Activated T-helper 1 cell treated with anti-CD3 and anti-CD28 coated beads, Interleukin-12 subunit alpha, Interleukin-12 subunit beta, Interleukin-2, Interleukin-4 antibody, amounts not matched to agents 30 ng/mL and 10 ng/mL and 1 ng/mL, durations not matched to agents 14 hours and 24 hours and 36 hours (primary cell): ENCODE measurements at regions of chr12 and their contacts with region 1.

Region 1: DNA sequence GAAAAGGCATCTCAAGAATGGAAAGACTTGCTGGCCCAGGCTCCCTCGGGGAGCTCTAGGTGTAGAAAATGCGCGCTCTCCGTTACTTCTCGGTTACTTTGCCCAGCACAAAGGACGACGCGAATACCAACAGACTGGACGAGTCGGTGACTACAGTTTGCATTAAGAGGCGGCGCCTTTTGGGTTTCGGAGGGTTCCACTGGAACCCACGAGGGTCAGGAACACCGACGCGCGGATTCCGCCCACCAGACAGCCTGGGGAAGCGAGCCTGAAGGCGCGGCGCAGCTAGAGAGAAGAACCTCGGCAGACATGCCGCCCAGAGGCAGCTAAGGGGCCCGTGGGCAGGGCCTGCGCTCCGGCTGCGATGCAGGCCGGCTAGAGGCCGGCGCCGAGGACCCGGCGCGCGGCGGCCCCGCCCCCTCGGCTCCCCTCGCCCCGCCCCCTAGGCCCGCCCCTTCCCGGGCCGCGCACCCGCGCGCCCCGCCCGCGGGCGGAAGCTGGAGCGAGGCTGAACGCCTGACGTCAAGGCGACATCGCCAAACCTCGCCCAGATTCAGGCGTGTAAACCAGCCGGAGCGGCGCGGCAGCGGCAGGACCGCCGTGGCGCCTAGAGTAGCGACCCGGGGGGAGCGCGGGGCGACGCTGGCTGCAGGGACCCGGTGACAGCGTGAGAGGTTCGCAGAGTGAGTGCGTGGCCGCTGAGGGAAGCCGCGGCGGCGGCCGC is at the start of gene RAP1B:
- DNase-seq: peak; percentile 89
- H3K4me3 Mint-ChIP-seq: peak within 1 kb of the TSS; percentile 96
- H3K27ac Mint-ChIP-seq: peak within 1 kb of the TSS; percentile 96
- H3K4me1 Mint-ChIP-seq: peaks cover 52% of the 10 kb centered on the region
- H3K27me3 Mint-ChIP-seq: no peaks in the 10 kb centered on the region
- total RNA-seq, gene RAP1B: 244 and 263 TPM in 2 replicates

Region 2: DNA sequence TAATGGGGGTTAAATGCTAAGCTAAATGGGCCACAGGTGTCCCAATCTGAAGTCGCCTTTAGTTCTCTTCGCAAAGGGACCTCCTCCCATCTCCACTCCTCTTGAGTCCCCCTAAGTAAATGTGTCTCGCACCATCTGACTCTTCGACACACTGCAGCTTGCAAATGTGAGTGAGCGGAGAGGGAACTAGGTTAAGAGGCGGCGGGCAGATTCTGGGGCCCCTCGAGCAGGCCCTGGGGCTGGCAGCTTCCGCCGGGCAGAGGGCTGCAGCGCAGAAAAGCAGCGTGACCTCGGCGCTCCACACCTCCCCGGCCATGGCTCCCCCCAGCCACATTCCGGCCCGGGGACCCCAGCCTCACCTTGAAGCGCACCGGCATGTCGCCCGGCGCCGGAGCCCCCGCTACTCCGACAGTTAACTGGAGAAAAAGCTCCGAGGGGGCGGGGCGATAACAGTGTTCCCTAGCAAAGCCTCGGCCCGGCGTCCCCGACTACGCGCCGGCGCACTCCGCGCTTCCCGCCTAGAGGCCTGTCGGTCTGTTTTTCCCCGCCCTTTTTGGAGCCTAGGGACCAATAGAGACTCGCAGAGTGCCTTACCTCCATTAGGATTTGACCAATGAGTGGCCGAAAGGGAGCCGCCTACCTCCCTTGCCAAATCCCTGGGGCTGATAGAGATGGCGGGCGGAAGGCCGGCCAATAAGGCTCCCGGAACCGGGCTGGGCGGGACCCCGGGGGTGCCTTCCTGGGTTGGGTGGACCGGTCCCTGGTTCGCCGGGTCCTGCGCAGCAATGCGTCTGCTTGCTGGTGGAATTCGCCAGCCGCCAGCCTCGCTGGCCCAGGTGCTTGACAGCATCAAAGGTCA is 278.4 kb before region 1 on chr12 and contains the start of gene MDM1:
- intact Hi-C with region 1: loop called (anchors 1 kb)
- DNase-seq: peak; percentile 95
- H3K4me3 Mint-ChIP-seq: peak within 1 kb of the TSS; percentile 89
- H3K27ac Mint-ChIP-seq: peak within 1 kb of the TSS; percentile 77
- H3K4me1 Mint-ChIP-seq: peaks cover 55% of the 10 kb centered on the region
- H3K27me3 Mint-ChIP-seq: peaks cover 2% of the 10 kb centered on the region
- total RNA-seq, gene MDM1: 26.8 and 29.9 TPM in 2 replicates

Region 3: DNA sequence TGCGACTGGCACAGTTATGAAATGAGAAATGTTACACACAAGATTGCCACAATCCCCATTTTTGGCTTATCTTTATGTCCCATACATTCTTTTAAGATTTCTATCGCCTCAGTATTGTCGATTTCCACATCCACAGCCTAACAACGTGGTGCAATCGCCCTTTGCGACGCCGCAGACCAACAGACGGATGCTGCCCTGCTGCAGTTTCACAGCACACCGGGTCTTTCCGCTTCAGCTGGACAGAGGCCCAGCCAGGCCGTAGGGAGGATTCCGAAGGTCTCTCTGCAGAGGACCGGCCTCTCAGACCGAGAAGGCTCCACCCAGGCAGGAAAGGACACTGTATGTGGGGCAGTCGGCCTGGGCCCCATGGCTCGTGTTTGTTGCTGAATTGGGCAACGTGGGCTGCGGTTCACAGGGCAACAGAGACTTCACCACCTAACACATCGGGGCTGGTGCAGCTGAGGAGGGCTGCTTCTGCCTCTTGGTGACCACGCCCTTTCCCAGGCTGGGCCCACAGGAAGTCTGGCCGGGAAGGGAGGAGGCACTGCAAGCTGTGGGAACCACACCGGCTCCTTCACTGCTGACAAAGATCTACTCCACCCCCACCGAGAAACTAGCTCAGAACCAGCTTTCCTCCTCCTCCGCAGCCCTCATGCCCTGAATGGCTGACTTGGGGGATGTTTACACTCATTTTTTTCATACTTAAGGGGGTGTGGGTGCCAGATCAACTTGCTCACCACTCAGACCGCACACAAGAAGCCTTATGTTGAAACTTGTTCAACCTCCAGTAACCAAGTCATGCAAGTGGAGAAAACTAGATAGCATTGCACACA is 245.4 kb before region 1 on chr12:
- intact Hi-C with region 1: loop called (anchors 1 kb)
- DNase-seq: peak; percentile 85
- H3K4me3 Mint-ChIP-seq: peak overlapping the region; percentile 77
- H3K27ac Mint-ChIP-seq: peak overlapping the region; percentile 92
- H3K4me1 Mint-ChIP-seq: peaks cover 76% of the 10 kb centered on the region
- H3K27me3 Mint-ChIP-seq: no peaks in the 10 kb centered on the region

Region 4: GRCh38 chr12:68482660-68483059 is 127.9 kb before region 1 on chr12:
- intact Hi-C with region 1: loop called (anchors 1 kb)
- DNase-seq: peak; percentile 44
- H3K4me3 Mint-ChIP-seq: peak overlapping the region; percentile 66
- H3K27ac Mint-ChIP-seq: peak overlapping the region; percentile 91
- H3K4me1 Mint-ChIP-seq: peaks cover 69% of the 10 kb centered on the region
- H3K27me3 Mint-ChIP-seq: no peaks in the 10 kb centered on the region

Region 5: GRCh38 chr12:68505970-68506369 is 104.6 kb before region 1 on chr12:
- intact Hi-C with region 1: no loop called
- DNase-seq: no peak
- H3K4me3 Mint-ChIP-seq: no peak overlapping the region
- H3K27ac Mint-ChIP-seq: no peak overlapping the region
- H3K4me1 Mint-ChIP-seq: peaks cover 6% of the 10 kb centered on the region
- H3K27me3 Mint-ChIP-seq: no peaks in the 10 kb centered on the region

Region 6: DNA sequence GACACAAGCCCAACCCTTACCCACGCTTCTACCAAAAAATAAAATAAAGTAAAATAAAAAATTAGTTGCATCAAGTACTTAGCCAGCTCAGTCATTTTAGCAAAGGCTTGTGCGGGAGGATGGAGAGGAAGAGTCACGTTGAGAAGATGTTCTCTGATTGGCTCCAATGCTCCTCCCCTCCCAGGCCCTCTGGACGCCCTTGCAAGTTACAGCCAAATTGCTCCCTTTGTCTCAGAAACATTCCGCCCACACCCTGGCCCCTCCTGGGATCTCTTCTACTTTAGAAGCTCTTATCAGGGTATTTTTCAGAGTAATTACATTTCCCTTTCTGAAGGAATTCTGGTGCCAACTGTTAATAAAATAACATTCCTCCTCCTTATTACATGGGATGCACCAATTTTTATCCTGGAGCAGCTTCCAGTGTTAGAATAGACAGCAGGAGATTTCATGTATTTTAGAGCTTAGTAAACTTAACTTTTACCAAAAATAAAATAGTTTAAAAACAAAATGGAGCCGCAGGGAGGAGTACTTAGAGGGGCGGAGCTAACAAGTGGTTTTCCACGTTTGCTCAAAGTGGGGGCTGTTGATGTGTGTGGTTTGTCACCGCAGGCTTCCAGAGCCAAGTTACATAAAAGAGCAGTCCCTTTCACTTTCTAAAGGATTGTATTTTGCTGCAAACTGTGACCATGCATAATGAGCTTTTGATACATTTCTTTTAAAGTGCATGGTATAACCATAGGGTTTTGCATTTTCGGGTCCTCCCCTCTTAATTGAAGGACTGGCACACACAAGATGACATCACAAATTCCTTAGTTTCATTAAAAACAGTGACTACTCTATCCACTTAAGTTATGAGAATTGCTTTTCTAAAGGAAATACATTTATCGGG is 71.6 kb before region 1 on chr12:
- intact Hi-C with region 1: loop called (anchors 1 kb)
- DNase-seq: peak; percentile 54
- H3K4me3 Mint-ChIP-seq: peak overlapping the region; percentile 23
- H3K27ac Mint-ChIP-seq: peak overlapping the region; percentile 52
- H3K4me1 Mint-ChIP-seq: peaks cover 48% of the 10 kb centered on the region
- H3K27me3 Mint-ChIP-seq: peaks cover 2% of the 10 kb centered on the region

Region 7: DNA sequence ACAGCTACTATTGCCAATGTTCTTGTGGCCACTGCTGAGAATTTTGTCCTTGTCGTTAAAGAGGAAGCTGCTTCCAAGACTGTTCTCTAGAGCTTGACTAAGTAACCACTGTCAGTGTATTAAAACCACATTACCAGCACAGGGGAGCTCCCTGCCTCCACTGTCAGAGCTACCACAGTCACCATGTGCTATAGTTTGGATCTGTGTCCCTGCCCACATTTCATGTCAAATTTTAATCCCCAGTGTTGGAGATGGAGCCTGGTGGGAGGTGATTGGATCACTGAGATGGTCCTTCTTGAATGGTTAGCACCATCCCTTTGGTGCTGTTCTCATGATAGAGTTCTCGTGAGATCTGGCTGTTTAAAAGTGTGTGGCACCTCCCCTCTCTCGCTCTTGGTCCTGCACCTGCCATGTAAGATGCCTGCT is 23.1 kb before region 1 on chr12:
- intact Hi-C with region 1: loop called (anchors 1 kb)
- DNase-seq: peak; percentile 38
- H3K4me3 Mint-ChIP-seq: peak overlapping the region; percentile 7
- H3K27ac Mint-ChIP-seq: peak overlapping the region; percentile 31
- H3K4me1 Mint-ChIP-seq: peaks cover 32% of the 10 kb centered on the region
- H3K27me3 Mint-ChIP-seq: no peaks in the 10 kb centered on the region